Psoas muscle (tissue), 8 donors: ENCODE measurements at regions of chr19 and their contacts with region 1.

Region 1: GRCh38 chr19:1383311-1384084 is at the start of gene NDUFS7:
- DNase-seq: peak; percentile 90 to 95
- ATAC-seq: peak; percentile 88 to 92 (median 90)
- H3K4me3 ChIP-seq: peak within 1 kb of the TSS; percentile 88
- H3K27ac ChIP-seq: peak within 1 kb of the TSS; percentile 93
- H3K4me1 ChIP-seq: peaks cover 41% of the 10 kb centered on the region
- H3K27me3 ChIP-seq: no peaks in the 10 kb centered on the region
- CTCF ChIP-seq: no peak
- total RNA-seq, gene NDUFS7: 230 to 338 (median 308) TPM

Region 2: DNA sequence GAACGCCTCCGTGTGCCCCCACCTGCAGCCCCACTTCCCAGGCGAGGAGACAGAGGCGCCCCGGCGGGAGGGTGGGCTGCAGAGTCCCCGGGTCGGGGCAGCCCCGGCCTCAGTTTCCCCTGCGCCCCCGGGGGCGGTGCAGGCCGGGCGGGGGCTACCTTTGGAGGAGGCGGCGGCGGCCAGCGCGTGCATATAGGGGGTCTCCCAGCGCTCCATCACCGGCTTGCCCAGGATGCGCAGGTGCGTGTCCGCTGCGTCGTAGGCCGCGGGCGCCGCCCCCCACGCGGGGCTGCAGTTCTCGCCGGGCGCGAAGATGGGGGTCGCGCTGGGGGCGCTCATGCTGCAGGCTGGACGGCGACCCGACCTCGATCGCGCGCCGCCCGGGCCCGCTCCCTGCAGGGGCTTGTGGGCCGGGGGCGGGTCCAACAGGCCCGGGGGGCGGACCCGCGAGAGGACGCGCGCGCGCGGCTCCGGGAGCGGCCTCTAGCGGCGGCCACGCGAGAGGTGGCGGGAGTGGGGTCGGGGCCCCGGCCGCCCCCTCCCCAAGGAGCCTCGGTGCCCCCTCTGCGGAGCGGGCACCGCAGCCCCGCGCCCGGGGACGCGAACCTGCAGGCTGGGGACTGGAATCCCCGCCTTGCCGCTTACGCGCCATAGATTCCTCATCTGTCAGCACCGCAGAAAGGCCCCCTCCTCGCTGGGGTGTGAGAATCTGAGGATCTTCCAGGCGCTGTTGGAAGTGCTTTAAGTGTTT is 17.8 kb after region 1 on chr19 and contains the start of gene GAMT:
- intact Hi-C with region 1: loop called in 1 of 2 experiments (anchors 2 kb)
- DNase-seq: no peak
- ATAC-seq: peak; percentile 26 to 76 (median 56)
- H3K4me3 ChIP-seq: peak within 1 kb of the TSS; percentile 91
- H3K27ac ChIP-seq: peak within 1 kb of the TSS; percentile 98
- H3K4me1 ChIP-seq: peaks cover 11% of the 10 kb centered on the region
- H3K27me3 ChIP-seq: no peaks in the 10 kb centered on the region
- CTCF ChIP-seq: peak; percentile 63
- total RNA-seq, gene GAMT: 227 to 339 (median 232) TPM

Region 3: DNA sequence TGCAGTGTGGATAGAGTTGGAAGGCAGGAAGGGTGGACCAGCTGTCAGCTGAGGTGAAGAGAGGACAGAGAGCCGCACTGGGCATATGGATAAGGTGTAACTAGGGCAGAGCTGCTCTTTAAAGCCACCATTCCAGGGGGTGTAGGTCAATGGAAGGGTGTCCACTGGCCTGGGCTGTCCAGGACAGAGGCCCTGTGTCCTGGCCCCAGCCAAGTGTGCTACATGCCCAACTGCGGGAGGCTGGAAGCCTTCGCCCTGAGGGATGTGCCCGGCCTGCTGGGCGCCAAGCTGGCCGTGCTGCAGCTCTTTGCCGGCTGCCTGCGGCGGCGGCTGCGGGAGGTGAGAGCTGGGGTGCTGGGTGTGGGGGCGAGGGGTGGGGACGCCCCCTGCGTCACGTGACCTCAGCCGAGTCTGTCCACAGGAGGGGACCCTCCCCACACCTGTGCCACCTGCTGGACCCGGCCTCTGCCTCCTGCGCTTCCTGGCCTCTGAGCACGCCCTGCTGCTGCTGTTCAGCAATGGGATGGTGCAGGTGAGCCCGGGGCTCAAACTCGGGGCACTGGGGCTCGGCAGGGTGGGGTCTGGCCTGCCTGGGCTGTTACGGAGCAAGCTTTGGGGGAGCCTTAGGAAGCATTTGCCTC is 150.1 kb after region 1 on chr19:
- intact Hi-C with region 1: no loop called
- DNase-seq: no peak
- ATAC-seq: no peak
- H3K4me3 ChIP-seq: no peak overlapping the region
- H3K27ac ChIP-seq: no peak overlapping the region
- H3K4me1 ChIP-seq: no peaks in the 10 kb centered on the region
- H3K27me3 ChIP-seq: peaks cover 0 to 45% (median 10%) of the 10 kb centered on the region in 3 donors
- CTCF ChIP-seq: no peak